Psoas muscle (tissue), 8 donors: ENCODE measurements at regions of chr13 and their contacts with region 1.

Region 1: DNA sequence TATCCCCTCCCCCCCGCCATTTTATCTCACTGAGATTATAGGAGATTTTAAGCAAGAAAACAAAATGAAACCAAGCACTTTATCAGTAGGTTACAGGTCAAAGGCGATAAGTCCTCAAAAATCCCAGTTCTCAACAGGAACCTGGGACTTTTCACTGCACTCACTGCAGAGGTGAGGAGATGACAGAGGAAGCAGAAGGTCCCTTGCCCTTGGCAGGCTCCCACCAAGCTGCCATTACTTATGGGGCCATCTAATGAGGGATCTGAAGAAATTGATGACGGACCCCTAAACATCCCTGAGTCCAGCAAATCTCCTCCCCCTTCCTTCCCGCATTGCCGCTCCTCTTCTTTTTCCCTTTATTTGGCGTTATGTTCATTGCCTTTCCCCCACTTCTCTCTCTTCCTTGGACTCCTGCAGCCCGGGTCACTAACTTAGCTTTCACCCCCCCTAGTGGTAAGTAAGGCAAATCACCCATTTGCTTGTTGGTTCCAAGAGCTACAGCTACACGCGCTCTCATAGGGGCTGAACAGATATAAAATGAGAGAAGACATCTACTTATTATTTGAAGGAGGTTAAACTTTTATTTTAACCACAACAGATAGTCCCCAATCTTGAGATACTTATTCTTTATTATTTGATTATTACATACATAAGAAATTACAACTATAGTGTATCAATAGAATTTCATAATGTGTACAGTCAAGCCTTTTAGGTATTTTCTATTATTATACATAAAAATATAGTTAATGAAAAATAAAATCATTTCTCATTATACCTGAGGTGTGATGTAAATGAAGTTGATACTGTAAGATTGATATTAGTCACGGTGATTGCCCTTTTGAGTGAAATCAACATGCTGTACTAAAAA is 52.0 kb upstream of the ARGLU1 start:
- DNase-seq: no peak
- ATAC-seq: peak; percentile 68 to 90 (median 82)
- H3K4me3 ChIP-seq: peak overlapping the region; percentile 30
- H3K27ac ChIP-seq: no peak overlapping the region
- H3K4me1 ChIP-seq: no peaks in the 10 kb centered on the region
- H3K27me3 ChIP-seq: peaks cover 0 to 13% (median 4%) of the 10 kb centered on the region in 3 donors
- CTCF ChIP-seq: peak; percentile 69

Region 2: GRCh38 chr13:106096661-106097092 is 523.2 kb before region 1 on chr13:
- intact Hi-C with region 1: loop called in 1 of 2 experiments (anchors 10 kb)
- DNase-seq: no peak
- ATAC-seq: no peak
- H3K4me3 ChIP-seq: no peak overlapping the region
- H3K27ac ChIP-seq: no peak overlapping the region
- H3K4me1 ChIP-seq: no peaks in the 10 kb centered on the region
- H3K27me3 ChIP-seq: no peaks in the 10 kb centered on the region
- CTCF ChIP-seq: no peak

Region 3: DNA sequence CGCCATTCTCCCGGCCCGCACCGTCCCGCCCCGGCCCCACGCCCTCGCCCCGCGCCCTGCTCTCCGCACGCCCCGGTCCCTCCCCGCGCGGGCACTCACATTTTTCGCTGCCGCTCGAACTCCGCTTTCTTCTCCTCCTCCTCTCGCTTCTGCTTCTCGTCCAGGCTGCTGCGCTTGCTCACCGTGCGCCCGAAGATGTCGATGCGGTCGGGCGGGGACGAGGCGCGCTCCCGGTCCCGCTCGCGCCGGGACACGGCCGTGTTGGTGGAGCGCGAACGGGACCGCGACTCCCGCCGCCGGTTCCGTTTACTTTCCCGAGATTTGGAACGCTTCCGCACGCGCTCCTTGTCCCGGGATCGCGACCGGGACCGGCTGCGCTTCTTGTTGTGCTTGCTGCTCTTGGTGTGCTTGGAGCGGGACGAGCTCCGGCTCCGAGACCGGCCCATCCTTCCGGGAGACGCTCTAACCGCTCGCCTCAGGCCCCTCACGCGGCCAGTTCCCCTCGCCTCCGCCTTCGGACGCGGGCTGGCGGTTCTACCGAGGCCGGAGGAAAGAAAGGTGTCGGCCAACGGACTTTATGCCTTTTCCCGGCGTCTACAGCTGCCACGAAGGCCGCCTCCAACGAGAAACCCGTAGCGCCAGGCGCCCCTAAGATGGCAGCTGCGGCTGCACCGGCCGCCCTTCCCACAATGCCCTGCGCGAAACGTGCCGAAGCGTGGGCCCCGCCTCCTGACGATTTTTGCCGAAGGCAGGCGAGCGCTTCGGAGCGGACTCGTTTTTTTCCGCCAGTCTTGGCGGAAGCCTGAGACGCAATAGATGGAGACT is 52.2 kb before region 1 on chr13 and contains the start of gene ARGLU1:
- intact Hi-C with region 1: loop called in 1 of 2 experiments (anchors 5 kb)
- DNase-seq: peak; percentile 93 to 97
- ATAC-seq: peak; percentile 96 to 98 (median 96)
- H3K4me3 ChIP-seq: peak within 1 kb of the TSS; percentile 82
- H3K27ac ChIP-seq: peak within 1 kb of the TSS; percentile 87
- H3K4me1 ChIP-seq: peaks cover 46% of the 10 kb centered on the region
- H3K27me3 ChIP-seq: no peaks in the 10 kb centered on the region
- CTCF ChIP-seq: no peak
- total RNA-seq, gene ARGLU1: 23.2 to 34.2 (median 27.1) TPM